ENCODE measurements at regions of chr9 and their contacts with region 1.

Region 1: DNA sequence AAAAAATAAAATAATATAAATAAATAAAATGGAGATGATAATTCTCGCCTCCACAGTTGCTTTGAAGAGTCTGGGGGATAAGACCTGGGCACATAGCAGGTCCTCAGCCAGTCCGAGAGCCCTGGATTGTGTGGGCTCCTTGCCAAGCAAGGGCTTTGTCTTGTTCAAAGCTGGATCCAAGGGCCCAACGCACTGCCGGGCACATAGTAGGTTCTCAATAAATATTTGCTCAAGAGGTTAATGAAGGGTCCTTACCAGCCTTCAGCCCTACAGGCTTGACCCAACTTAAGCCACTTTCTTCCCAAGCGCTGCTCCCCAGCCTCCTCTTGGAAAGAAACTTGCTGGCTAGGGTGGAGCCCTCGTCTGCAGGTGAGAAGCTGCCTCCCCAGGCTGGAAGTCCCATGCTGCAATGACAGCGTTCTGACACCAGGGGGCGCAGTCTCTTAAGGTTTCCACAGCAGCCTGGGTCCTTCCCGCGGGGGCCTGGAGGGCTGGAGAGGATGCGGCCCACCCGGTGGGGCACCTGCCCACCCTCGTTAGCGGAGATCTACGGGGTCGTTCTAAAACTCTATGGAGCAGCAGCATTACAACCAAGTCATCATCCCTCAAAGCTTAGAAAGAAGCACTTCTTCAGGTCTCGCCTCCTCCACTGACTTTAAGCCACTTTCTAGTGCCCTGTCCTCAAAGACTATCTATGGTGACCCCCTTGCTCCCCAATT is 115.2 kb downstream of the LHX2 start:
- DNase-seq: peak; percentile 74
- H3K4me3 ChIP-seq: no peak overlapping the region
- H3K27ac ChIP-seq: no peak overlapping the region
- H3K4me1 ChIP-seq: no peaks in the 10 kb centered on the region
- H3K27me3 ChIP-seq: no peaks in the 10 kb centered on the region
- CTCF ChIP-seq: peak; percentile 96

Region 2: GRCh38 chr9:124291801-124292396 is 165.2 kb after region 1 on chr9:
- CTCF ChIA-PET with region 1: interaction called, 4 read pairs
- POLR2A ChIA-PET with region 1: no interaction called
- intact Hi-C with region 1: loop called (anchors 10 kb)
- DNase-seq: peak; percentile 83
- H3K4me3 ChIP-seq: peak overlapping the region; percentile 15
- H3K27ac ChIP-seq: peak overlapping the region; percentile 64
- H3K4me1 ChIP-seq: peaks cover 30% of the 10 kb centered on the region
- H3K27me3 ChIP-seq: no peaks in the 10 kb centered on the region
- CTCF ChIP-seq: no peak

Region 3: GRCh38 chr9:124320062-124320973 is 193.6 kb after region 1 on chr9:
- CTCF ChIA-PET with region 1: no interaction called
- POLR2A ChIA-PET with region 1: no interaction called
- intact Hi-C with region 1: loop called (anchors 2 kb)
- DNase-seq: peak; percentile 80
- H3K4me3 ChIP-seq: no peak overlapping the region
- H3K27ac ChIP-seq: no peak overlapping the region
- H3K4me1 ChIP-seq: no peaks in the 10 kb centered on the region
- H3K27me3 ChIP-seq: no peaks in the 10 kb centered on the region
- CTCF ChIP-seq: peak; percentile 89

Region 4: GRCh38 chr9:124392871-124393460 is 266.2 kb after region 1 on chr9:
- CTCF ChIA-PET with region 1: interaction called, 5 read pairs
- POLR2A ChIA-PET with region 1: no interaction called
- intact Hi-C with region 1: loop called (anchors 2 kb)
- DNase-seq: peak; percentile 89
- H3K4me3 ChIP-seq: no peak overlapping the region
- H3K27ac ChIP-seq: peak overlapping the region; percentile 79
- H3K4me1 ChIP-seq: peaks cover 49% of the 10 kb centered on the region
- H3K27me3 ChIP-seq: no peaks in the 10 kb centered on the region
- CTCF ChIP-seq: peak; percentile 81